Motor neuron (in vitro differentiated cells): ENCODE measurements at regions of chr3 and their contacts with region 1.

Region 1: DNA sequence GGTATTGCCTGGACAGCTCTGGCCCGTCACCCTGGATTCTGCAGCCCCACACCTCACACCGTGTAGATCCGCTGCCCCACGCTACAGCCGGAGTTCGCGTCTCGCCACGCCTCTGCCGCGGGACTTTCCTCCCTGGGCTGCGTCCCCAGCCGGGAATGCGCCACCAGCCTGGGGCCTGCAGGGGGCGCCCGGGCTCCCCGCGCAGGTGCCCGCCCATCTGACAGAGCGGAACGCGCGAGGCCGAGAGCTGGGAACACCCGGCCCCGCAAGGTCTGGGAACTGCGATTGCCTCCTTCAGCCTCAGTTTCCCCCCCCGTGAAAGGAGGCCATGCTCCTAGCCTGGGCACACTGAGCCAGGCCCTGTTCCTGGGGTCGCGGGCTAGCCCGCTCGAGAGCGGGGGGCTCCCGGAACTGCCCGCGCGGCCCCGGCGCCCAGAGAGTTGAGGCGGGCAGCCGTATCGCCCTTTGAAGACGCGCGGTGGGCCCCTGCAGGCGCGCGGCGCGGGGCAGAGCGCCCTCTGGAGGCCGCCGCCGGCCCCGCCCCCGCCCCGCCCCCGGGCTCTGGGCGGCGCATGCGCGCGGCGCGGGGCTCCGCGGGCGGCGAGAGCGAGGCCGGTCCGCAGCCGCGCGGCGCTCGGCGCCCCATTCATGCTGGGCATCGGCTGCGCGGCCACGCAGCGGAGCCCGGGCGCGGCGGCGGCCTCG is at the start of gene PLXNA1:
- ATAC-seq: peak; percentile 49 to 82 (median 68)
- H3K4me3 ChIP-seq: peak within 1 kb of the TSS; percentile 66 to 96 (median 80)
- H3K27ac ChIP-seq: peak within 1 kb of the TSS; percentile 67 to 83
- H3K4me1 ChIP-seq: peaks cover 11 to 18% of the 10 kb centered on the region in 2 donors
- total RNA-seq, gene PLXNA1: 28.2 to 56.1 (median 37.1) TPM

Region 2: DNA sequence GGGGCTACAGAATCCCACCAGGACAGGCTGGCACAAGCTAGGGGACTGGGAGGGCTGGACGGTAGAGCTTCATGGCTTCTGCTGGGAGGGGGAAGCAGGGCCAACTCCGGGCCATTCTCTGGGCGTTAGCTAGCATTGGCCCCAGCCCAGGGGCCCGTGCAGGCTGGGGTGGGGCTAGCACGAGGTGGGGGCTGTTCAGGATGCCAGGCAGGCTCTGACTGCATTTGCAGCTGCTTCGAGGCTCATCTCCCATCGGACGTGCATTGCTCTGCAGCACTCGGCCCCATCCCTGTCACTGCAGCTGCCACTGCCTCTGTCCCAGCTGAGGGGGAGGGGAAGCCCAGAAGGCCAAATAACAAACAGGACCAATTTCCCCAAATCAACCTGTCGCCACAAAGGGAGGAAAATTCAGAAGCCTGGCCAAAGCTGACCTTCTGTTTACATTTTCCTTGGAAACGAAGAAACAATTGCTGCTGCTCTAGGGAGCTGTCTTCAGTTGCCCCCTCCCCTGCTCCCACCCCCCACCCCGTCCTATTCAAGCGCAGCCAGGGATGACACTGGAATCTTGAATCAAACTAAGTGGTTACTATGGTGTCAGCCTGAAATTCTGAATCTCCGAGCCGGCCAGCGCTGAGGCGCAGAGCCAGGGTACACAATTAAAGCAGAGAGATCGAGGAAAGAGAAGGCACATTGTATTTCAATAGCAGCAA is 444.0 kb after region 1 on chr3:
- in situ Hi-C with region 1: loop called in 1 of 9 experiments (anchors 25 kb)
- ATAC-seq: peak; percentile 53 to 89 (median 84)
- H3K4me3 ChIP-seq: no peak overlapping the region
- H3K27ac ChIP-seq: peak overlapping the region; percentile 46 to 91
- H3K4me1 ChIP-seq: peaks cover 50 to 68% of the 10 kb centered on the region in 2 donors

Region 3: DNA sequence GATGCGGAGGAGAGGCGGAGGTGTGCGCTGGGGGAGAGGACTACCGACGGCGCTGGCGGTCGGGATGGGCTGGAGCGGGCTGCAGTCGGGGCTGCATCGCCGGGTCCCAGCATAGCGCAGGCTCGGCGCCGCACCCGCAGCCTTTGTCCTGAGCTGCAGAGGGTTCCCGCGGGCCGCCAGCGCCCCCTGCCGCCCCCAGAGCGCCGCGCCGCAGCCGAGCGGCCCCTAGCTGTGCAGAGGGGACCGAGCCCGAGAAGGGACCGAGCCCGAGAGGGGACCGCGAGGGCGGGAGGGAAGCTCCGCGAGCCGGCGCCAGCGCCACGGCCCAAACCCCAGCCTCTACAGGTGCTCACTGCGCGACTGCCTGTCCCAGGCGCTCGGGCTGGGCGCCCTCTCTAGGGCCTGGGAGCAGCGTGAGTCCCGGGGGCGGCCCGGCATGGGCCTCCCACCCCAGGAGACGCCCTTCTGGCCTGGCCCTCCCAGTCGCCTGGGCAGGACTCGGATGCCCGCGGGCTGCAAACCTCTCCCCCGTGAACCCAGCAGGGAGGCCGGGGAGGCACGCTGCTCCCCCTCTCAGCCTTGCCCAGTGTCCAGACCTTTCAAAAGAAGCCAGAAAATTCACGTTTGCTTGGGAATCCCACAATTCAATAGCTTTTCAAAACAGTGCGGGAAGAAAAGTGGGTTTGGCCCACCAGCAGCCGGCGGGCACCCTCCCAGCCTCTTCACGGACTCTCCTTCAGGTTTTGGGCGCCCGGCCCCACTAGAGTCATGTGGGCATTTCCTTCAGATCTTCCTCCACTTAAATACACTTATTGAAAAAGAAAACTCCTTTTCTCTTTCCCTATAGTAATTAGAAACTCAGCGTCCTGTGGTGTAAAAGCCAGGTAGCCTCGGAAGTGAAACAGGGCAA is 473.2 kb after region 1 on chr3:
- in situ Hi-C with region 1: loop called in 2 of 9 experiments (anchors 25 kb)
- ATAC-seq: peak; percentile 92 to 98 (median 93)
- H3K4me3 ChIP-seq: peak overlapping the region in 4 of 5 donors; percentile 1 to 18 (median 6)
- H3K27ac ChIP-seq: no peak overlapping the region
- H3K4me1 ChIP-seq: peaks cover 31 to 47% of the 10 kb centered on the region in 2 donors